Posterior vena cava (tissue), 2 donors: ENCODE measurements at regions of chr9 and their contacts with region 1.

Region 1: DNA sequence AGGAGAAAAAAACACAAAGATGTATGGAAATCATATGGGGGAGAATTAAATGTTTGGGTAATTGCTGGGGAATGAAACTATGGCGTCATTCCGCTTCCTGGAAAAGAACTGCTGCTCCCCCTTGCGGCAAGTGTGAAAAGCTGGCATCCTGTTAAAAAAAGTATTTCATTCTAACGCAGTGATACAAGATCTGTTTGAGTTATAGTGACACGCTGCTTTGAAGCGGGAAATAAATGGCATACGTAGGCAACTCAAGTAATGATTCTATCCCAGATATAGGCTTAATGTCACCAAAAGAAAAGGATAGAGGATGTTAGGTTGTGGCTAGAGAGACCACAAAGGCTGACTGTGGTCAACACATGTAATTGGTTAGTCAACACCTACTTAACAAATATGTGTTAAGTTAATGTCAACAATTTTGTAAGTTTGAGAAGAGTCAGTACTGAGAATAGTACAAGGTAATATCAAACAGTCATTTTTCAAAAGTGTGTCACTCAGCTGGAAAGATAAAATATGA is 70.2 kb upstream of the ALDH1A1 start:
- DNase-seq: no peak

Region 2: DNA sequence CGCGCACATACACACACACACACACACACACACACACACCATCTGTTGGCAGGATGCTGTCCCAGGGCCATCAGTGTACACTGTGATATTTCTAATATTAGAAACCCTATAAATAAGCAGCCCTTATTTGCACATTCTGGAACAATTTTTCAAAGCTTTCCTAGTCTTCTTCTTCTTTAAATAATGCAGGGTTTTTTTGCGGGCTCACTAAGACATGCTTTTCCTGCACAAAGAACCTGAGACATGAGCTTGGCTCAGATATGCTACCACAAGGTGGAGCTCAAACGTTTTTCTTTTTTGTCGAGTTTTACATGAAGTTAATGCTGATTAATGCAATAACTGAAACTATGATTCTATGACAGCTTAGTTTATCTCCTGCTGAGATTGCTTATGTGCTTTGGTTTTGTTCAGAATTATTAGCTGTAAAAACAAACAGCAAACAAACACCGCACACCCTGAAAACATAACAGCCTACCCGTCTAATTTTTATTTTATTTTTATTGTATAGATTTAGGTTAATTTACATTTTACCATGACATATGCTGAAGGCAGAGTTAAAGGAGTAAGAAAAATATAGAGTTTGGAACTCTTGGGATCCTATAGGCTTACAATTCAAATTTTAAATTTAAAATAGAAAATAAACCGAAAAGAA is 166.0 kb before region 1 on chr9:
- intact Hi-C with region 1: loop called (anchors 5 kb)
- DNase-seq: no peak

Region 3: GRCh38 chr9:72871685-72872084 is 151.4 kb before region 1 on chr9:
- intact Hi-C with region 1: loop called in 1 of 2 experiments (anchors 5 kb)
- DNase-seq: no peak

Region 4: GRCh38 chr9:73059247-73059646 is 36.2 kb after region 1 on chr9:
- intact Hi-C with region 1: no loop called
- DNase-seq: no peak

Region 5: DNA sequence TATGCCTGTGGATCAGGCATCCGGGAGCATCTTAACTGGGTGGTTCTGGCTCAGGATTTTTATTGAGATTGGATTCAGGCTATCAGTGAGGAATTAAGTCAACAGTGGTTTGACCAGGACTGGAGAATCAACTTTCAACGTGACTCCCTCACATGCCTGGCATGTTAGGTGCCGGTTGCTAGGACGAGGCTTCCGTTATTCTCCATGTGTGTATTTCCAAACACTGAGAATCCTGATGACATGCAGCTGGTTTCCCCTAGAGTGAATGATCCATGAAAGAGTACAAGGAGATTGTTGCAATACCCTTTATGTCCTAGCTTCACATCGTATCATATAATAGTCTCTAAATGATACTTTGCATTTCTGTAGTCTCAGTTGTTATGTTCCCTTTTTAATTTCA is 657.7 kb after region 1 on chr9:
- intact Hi-C with region 1: no loop called
- DNase-seq: no peak